GM10248 (cell line): ENCODE measurements at regions of chr6 and their contacts with region 1.

Region 1: DNA sequence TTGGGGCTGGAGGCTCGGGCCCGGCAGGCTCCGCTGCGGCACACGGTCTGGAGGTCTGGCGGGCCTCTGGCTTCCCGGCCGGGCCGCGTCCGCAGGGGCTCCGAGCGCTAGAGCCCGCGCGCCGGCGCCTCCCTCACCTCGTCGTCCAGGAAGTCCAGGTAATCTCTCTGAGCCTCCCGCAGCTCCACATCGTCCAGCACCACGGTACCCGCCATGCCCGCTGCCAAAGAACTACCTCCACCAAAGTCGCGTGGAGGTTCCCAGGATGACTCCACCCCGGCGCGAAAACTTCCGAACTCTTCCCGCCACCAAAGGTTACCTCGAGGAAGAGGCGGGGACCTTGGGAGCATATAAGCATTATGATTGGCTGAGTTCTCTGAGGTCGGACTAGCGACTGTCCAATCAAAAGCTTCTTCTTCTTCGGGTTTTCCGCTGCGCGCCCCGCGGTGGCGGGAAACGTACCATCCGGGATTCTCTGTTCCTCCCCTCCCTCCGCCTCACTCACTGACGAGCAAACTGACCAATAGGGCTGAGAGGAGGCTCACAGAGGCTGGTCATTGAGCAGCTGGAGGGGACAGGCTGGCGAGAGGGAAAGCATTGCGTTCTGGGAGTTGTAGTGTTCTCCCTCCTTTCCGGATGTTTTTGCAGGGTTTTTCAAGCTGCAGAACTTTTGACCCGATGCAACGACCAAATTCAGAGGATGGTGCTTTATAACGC is at the start of gene MCM3:
- DNase-seq: peak; percentile 95
- CTCF ChIP-seq: no peak

Region 2: DNA sequence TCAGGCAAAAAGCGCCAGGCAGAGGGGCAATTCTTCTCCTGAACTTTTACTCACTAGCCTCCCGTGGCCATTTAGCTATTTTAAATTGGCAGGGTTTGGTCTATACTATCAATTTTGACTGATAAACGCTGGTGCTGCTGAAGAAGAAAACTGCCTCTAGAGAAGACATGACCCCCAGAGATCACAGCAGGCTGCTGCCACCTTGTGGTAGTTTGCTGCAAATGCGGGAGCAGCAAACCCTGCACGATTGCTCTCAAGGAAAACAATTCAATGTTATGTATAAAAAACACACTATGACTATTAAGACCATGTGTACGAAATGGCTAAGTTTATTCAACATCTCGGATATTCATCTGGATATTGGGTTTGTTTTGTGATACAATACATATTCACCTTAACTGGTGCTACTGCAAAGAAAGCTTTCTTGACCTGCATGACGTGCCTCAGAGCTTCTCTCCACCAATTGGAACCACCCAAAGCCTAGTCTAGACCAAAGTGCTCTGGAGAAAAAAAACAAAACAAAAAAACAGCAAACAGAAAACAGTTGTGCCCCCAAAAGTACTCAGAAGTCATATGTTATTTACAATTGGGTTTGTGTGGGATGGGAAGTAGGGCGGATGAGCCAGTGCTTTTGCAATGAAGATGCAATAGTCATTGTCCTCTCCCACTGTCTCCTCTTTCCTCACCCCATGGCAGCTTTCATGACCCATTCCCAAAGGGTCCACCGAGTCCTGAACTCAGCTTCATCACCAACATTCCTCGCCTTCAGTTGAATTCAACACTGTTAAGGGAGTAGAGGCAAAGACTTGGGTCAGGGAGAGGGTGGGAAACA is 20.7 kb before region 1 on chr6:
- CTCF ChIA-PET with region 1: interaction called, 22 read pairs
- POLR2A ChIA-PET with region 1: no interaction called
- DNase-seq: peak; percentile 66
- CTCF ChIP-seq: peak; percentile 87

Region 3: DNA sequence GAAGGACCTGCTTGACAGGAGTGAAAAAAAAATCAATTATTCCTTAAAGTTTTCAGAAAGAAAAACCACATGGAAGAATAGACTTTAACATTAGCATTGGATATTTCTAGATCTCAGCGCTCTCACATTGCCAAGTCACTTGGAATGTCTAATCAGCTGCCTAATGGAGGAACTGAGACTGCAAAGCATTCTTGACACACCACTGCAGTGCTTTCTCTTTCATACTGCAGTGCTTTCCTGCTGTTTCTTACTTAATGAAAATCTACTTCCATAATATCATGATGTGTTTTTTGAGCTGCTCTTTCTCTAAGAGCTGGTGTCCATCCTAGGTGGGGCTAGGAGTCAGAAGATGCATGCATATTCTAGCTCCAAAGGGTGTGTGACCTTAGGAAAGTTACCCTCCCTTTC is 20.4 kb after region 1 on chr6:
- CTCF ChIA-PET with region 1: interaction called, 29 read pairs
- POLR2A ChIA-PET with region 1: no interaction called
- DNase-seq: peak; percentile 59
- CTCF ChIP-seq: no peak

Region 4: DNA sequence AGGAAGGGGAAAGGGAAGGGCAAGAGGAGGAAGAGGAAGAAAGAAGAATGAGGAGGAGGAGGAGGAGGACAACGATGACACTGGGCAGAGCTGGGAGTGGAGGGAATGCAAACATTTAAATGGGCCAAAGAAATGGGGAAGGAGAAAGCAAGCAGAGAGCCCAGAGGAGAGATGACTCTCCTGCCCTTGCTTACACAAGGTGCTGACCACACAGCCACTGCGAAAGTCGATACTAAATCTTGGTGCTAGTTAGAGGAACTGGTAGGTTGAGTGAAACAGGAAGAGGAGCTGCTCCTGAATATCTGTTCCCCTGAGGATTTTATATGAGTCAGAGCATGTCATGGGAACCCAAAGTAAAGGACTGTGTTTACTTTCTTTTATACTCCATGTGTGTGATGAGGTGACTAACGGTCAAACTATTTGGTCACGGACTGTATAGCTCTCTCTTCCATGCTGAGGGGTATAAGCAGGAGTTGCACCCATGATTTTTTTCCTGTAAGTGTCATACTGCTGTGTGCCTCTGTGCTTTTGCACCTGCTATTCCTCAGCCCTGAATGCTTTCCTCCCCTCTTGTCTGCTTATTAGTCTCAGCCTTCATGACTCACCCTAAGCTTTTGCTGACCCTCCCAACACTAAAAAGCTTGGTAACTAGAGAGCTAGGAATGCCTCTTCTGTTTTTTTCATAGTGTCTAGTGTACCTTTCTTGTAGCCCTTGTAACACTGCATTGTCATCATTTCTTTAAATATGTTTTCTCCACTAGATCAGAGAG is 67.8 kb after region 1 on chr6:
- CTCF ChIA-PET with region 1: interaction called, 14 read pairs
- POLR2A ChIA-PET with region 1: no interaction called
- DNase-seq: peak; percentile 56
- CTCF ChIP-seq: no peak

Region 5: GRCh38 chr6:52377538-52378221 is 93.1 kb after region 1 on chr6:
- CTCF ChIA-PET with region 1: interaction called, 14 read pairs
- POLR2A ChIA-PET with region 1: no interaction called
- DNase-seq: no peak
- CTCF ChIP-seq: no peak

Region 6: DNA sequence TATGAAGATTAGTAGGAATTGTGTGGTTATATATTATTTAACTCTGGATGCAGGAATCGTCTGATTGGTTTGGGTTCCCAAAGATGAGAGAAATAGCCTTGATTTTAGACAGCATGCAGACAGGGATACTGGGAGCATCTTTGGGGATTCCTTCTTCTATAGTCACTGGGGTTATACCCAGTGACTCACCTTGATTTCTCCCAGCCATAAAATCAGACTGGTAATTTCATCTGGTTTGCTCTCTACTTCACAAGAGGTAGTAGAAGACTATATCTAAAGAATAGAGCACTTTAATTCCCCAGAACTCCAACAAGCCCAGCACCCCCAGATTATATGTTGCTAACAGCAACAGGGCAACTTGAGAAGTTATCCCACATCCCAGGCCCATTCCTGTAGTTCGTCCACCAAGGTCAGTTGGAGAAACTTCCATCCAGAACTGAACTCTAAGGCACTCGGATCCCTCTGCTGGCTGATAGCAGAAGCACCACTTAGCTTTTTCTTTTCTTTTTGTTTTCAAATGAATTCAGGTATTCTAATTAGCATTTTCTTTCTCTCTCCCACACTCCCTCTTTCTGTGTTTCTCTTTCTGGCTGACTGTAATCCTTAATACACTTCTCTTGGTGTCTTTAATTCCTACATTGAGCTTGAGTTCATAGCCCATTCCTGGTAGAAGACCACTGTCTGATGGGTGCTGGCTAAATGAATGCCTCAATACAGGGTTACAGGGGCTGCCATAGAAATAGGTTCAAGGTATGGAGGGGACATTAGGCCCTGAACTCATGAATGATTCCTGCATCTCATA is 115.1 kb after region 1 on chr6:
- CTCF ChIA-PET with region 1: interaction called, 195 read pairs
- POLR2A ChIA-PET with region 1: interaction called, 5 read pairs
- DNase-seq: peak; percentile 33
- CTCF ChIP-seq: peak; percentile 77

Region 7: DNA sequence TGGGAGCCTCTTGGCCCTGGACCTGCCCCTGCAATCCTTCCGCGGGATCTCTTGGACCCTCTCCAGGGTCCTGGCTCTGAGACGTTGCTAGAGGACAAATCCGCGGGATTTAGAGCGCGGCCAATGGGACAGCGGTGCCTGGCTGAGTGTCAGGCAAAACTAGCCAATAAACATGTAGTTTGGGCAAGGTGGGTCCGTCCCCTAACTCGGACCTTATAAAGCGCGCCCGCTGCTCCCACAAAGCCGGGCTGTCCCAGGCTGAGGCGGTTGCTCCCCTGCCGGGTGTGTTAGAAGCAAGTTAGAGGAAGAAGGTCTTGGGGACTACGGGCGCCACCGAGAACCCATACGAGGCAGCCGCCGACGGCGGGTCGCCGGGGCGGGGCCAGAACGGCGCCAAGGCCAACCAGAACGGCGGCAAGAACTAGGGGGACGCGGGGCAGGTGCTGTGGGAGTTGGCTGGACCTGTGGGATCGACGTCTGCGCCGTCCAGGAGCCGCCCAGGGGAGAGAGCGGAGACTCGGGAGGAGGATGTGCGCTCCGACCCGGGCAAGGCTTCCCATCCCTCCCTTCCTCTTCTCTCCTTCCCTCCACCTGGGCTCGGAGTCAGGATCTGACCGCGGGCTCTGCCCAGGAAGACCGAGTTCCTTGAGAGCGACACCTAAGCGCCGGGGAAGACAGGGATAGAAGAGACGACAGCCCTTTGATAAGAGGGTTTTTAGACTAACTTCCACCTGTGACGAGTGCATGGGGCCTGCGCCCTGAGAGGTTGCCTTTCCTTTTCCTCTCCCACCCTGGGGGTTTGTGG is 379.8 kb after region 1 on chr6:
- CTCF ChIA-PET with region 1: interaction called, 12 read pairs
- POLR2A ChIA-PET with region 1: no interaction called
- DNase-seq: peak; percentile 95
- CTCF ChIP-seq: no peak